Activated naive CD4-positive, alpha-beta T cell treated with anti-CD3 and anti-CD28 coated beads for 36 hours (primary cell): ENCODE measurements at regions of chr22 and their contacts with region 1.

Region 1: GRCh38 chr22:50620593-50621355 is 7.2 kb downstream of the ARSA start:
- DNase-seq: peak; percentile 89
- H3K4me3 Mint-ChIP-seq: peak overlapping the region; percentile 72
- H3K27ac Mint-ChIP-seq: peak overlapping the region; percentile 98
- H3K4me1 Mint-ChIP-seq: peaks cover 35% of the 10 kb centered on the region
- H3K27me3 Mint-ChIP-seq: no peaks in the 10 kb centered on the region

Region 2: DNA sequence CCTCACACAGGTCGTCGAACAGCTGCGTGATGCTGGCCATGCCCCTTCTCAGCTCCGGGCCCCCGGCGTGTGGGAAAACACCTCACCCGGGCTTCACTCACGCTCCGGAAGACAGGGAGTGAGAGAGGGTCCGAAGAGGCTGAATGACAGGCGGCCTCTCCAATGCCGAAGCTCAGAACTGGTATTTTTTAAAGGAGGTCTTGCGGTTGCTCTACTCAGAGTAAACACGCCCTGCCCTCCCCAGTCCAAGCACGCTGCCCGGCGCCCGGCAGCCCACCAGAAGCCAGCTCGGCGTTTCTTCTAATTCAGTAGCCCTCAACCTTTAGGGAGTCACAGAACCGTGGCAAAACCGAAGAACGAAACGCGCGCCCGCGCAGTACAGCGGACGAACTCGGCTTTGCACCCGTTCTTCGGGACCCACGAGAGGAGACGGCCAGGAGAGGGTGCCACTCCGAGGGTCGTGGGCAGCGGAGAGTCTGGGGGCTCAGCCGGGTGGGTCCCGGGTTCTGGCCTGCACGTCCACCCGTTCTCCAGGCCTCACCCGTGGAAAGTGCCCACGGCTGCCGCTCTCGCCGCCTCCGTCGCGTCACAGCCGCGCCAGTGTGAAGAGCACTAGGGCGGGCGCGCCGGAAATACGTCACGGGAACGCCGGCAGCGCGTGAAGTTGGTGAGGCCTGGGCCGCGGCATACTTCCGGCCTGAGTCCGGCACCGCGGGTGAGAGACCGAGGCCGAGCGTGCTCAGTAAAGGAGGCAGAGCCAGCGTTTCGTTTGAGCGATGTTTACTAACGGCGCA is 376.2 kb before region 1 on chr22 and contains the start of gene TUBGCP6:
- CTCF ChIA-PET with region 1: interaction called, 5 read pairs
- intact Hi-C with region 1: loop called (anchors 2 kb)
- DNase-seq: peak; percentile 94
- H3K4me3 Mint-ChIP-seq: peak within 1 kb of the TSS; percentile 99
- H3K27ac Mint-ChIP-seq: peak within 1 kb of the TSS; percentile 98
- H3K4me1 Mint-ChIP-seq: peaks cover 48% of the 10 kb centered on the region
- H3K27me3 Mint-ChIP-seq: no peaks in the 10 kb centered on the region
- total RNA-seq, gene TUBGCP6: 44.5 to 47.8 TPM

Region 3: DNA sequence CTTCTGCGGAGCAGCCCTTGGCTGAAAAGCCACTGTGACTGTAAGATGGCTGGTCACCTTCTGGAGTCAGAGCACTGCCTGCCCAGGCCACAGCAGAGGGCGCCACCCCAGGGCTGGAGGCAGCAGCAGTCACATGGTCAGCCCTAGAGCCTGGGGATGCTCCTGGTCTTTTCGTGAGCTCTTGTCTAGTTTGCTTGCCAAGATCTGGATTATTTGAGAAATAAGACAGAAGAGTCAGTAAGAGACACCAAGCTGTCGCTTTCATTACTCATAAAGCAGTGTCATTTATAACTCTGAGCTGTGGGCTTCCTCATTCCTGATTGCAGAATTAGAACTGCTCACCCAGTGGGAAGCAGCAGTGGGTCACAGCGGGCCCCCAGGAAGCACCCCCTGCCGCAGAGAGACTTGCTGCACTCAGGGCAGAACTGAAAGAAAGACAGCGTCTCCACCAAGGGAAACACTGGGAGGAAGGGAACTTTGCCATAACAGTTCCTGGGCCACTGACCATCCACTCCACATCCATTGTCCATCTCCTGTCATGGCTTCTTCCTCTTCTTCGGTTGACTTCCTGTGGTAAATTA is 220.9 kb before region 1 on chr22:
- CTCF ChIA-PET with region 1: no interaction called
- intact Hi-C with region 1: loop called (anchors 1 kb)
- DNase-seq: peak; percentile 58
- H3K4me3 Mint-ChIP-seq: no peak overlapping the region
- H3K27ac Mint-ChIP-seq: peak overlapping the region; percentile 43
- H3K4me1 Mint-ChIP-seq: peaks cover 25% of the 10 kb centered on the region
- H3K27me3 Mint-ChIP-seq: no peaks in the 10 kb centered on the region

Region 4: GRCh38 chr22:50525390-50526068 is 95.2 kb before region 1 on chr22 and contains the start of gene SCO2:
- CTCF ChIA-PET with region 1: interaction called, 25 read pairs
- intact Hi-C with region 1: loop called (anchors 1 kb)
- DNase-seq: peak; percentile 98
- H3K4me3 Mint-ChIP-seq: peak within 1 kb of the TSS; percentile 97
- H3K27ac Mint-ChIP-seq: peak within 1 kb of the TSS; percentile 93
- H3K4me1 Mint-ChIP-seq: peaks cover 35% of the 10 kb centered on the region
- H3K27me3 Mint-ChIP-seq: no peaks in the 10 kb centered on the region
- total RNA-seq, gene SCO2: 1.1 to 2.1 TPM

Region 5: GRCh38 chr22:50544078-50544745 is 76.6 kb before region 1 on chr22:
- CTCF ChIA-PET with region 1: interaction called, 9 read pairs
- intact Hi-C with region 1: loop called (anchors 1 kb)
- DNase-seq: peak; percentile 92
- H3K4me3 Mint-ChIP-seq: peak overlapping the region; percentile 62
- H3K27ac Mint-ChIP-seq: peak overlapping the region; percentile 72
- H3K4me1 Mint-ChIP-seq: peaks cover 60% of the 10 kb centered on the region
- H3K27me3 Mint-ChIP-seq: no peaks in the 10 kb centered on the region

Region 6: GRCh38 chr22:50582562-50583293 is 38.0 kb before region 1 on chr22 and contains the start of gene CHKB:
- CTCF ChIA-PET with region 1: interaction called, 8 read pairs
- intact Hi-C with region 1: loop called (anchors 1 kb)
- DNase-seq: peak; percentile 99
- H3K4me3 Mint-ChIP-seq: peak within 1 kb of the TSS; percentile 91
- H3K27ac Mint-ChIP-seq: peak within 1 kb of the TSS; percentile 82
- H3K4me1 Mint-ChIP-seq: peaks cover 31% of the 10 kb centered on the region
- H3K27me3 Mint-ChIP-seq: no peaks in the 10 kb centered on the region
- total RNA-seq, gene CHKB: 71.0 to 81.4 TPM

Region 7: GRCh38 chr22:50670513-50670912 is 49.7 kb after region 1 on chr22:
- CTCF ChIA-PET with region 1: no interaction called
- intact Hi-C with region 1: no loop called
- DNase-seq: no peak
- H3K4me3 Mint-ChIP-seq: no peak overlapping the region
- H3K27ac Mint-ChIP-seq: no peak overlapping the region
- H3K4me1 Mint-ChIP-seq: peaks cover 8% of the 10 kb centered on the region
- H3K27me3 Mint-ChIP-seq: peaks cover 18% of the 10 kb centered on the region